Activated B cell treated with CpG ODN at 0.5 μM for 24 hours (primary cell): ENCODE measurements at regions of chr12 and their contacts with region 1.

Region 1: GRCh38 chr12:10331642-10332239 is 24.1 kb downstream of the KLRD1 start:
- DNase-seq: no peak
- ATAC-seq: peak; percentile 47
- H3K4me3 Mint-ChIP-seq: no peak overlapping the region
- H3K27ac Mint-ChIP-seq: no peak overlapping the region
- H3K4me1 Mint-ChIP-seq: no peaks in the 10 kb centered on the region
- H3K27me3 Mint-ChIP-seq: peaks cover 5% of the 10 kb centered on the region
- CTCF ChIP-seq: peak; percentile 24

Region 2: DNA sequence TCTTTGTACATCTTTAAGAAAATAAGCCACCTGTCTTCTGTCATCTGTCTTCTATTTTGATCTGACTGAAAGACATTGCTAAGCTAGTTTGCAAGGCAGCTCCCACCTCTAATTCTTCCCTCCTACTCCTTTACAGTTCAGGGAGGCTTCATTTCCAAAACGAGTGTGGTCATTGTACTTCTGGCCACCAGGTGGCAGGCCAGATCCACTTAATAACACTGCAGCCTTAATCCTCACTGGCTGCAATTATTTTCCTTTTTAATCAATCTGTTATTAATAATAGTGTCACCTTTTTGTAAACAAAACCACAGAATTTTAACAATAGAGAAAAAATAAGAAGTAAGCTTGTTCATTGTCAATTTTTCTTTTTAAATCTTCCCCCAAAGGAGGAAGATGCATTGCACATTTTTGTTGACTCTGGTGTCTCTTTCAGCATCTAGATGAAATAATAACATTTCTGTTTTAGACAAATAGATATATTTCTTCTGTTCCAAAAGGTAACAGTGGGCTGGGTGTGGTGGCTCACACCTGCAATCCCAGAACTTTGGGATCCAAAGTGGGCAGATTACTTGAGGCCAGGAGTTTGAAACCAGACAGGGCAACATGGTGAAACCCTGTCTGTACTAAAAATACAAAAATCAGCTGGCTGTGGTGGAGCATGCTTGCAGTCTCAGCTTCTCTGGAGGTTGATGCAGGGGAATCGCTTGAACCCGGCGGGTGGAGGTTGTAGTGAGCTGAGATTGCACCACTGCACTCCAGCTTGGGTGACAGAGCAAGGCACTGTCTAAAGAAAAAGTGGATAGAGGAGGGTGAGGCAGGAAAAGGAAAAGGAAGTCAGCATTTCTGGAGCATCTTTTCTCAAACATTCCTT is 95.7 kb before region 1 on chr12:
- CTCF ChIA-PET with region 1: interaction called, 3 read pairs
- POLR2A ChIA-PET with region 1: no interaction called
- intact Hi-C with region 1: loop called (anchors 1 kb)
- DNase-seq: no peak
- ATAC-seq: peak; percentile 58
- H3K4me3 Mint-ChIP-seq: no peak overlapping the region
- H3K27ac Mint-ChIP-seq: no peak overlapping the region
- H3K4me1 Mint-ChIP-seq: no peaks in the 10 kb centered on the region
- H3K27me3 Mint-ChIP-seq: peaks cover 2% of the 10 kb centered on the region
- CTCF ChIP-seq: peak; percentile 59

Region 3: DNA sequence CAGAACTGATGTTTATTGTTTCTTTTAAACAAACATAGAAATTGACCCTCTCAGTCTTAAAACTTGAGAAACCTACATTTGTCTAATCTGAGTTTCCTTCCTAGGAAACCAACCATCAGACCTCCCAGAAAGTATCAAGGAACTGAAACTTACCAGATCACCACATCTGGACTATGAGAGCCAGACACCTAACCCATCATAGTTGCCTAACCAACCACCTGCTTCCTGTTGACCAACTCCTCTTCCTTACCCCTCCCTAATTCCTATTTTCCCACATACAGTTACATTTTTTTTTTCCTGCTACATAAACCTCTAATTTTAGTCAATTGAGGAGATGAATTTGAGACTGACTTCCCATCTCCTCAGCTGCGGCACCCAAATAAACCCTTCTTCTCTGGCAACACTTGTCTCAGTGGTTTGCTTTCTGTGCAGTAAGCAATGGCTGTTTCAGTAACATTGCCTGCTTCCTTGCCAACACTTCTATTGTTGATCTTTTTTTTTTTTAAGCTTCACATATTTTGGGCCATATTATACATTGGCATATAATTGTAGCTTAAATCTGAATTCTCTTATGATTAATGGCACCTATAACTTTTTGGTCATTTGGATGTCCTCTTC is 10.3 kb after region 1 on chr12:
- CTCF ChIA-PET with region 1: no interaction called
- POLR2A ChIA-PET with region 1: no interaction called
- intact Hi-C with region 1: no loop called
- DNase-seq: no peak
- ATAC-seq: no peak
- H3K4me3 Mint-ChIP-seq: peak overlapping the region; percentile 41
- H3K27ac Mint-ChIP-seq: no peak overlapping the region
- H3K4me1 Mint-ChIP-seq: peaks cover 11% of the 10 kb centered on the region
- H3K27me3 Mint-ChIP-seq: no peaks in the 10 kb centered on the region
- CTCF ChIP-seq: no peak

Region 4: GRCh38 chr12:10409387-10409786 is 77.6 kb after region 1 on chr12 and contains the start of gene KLRC4:
- CTCF ChIA-PET with region 1: interaction called, 5 read pairs
- POLR2A ChIA-PET with region 1: no interaction called
- intact Hi-C with region 1: loop called (anchors 2 kb)
- DNase-seq: no peak
- ATAC-seq: no peak
- H3K4me3 Mint-ChIP-seq: no peak within 1 kb of the TSS
- H3K27ac Mint-ChIP-seq: no peak within 1 kb of the TSS
- H3K4me1 Mint-ChIP-seq: peaks cover 8% of the 10 kb centered on the region
- H3K27me3 Mint-ChIP-seq: peaks cover 3% of the 10 kb centered on the region
- CTCF ChIP-seq: no peak
- total RNA-seq, gene KLRC4: not detected in 2 replicates

Region 5: GRCh38 chr12:10501031-10501430 is 169.3 kb after region 1 on chr12:
- CTCF ChIA-PET with region 1: no interaction called
- POLR2A ChIA-PET with region 1: no interaction called
- intact Hi-C with region 1: loop called (anchors 5 kb)
- DNase-seq: no peak
- ATAC-seq: no peak
- H3K4me3 Mint-ChIP-seq: no peak overlapping the region
- H3K27ac Mint-ChIP-seq: no peak overlapping the region
- H3K4me1 Mint-ChIP-seq: no peaks in the 10 kb centered on the region
- H3K27me3 Mint-ChIP-seq: peaks cover 7% of the 10 kb centered on the region
- CTCF ChIP-seq: no peak

Region 6: GRCh38 chr12:10562306-10562933 is 230.7 kb after region 1 on chr12:
- CTCF ChIA-PET with region 1: interaction called, 37 read pairs
- POLR2A ChIA-PET with region 1: no interaction called
- intact Hi-C with region 1: loop called (anchors 1 kb)
- DNase-seq: no peak
- ATAC-seq: no peak
- H3K4me3 Mint-ChIP-seq: no peak overlapping the region
- H3K27ac Mint-ChIP-seq: no peak overlapping the region
- H3K4me1 Mint-ChIP-seq: no peaks in the 10 kb centered on the region
- H3K27me3 Mint-ChIP-seq: peaks cover 11% of the 10 kb centered on the region
- CTCF ChIP-seq: peak; percentile 87

Region 7: DNA sequence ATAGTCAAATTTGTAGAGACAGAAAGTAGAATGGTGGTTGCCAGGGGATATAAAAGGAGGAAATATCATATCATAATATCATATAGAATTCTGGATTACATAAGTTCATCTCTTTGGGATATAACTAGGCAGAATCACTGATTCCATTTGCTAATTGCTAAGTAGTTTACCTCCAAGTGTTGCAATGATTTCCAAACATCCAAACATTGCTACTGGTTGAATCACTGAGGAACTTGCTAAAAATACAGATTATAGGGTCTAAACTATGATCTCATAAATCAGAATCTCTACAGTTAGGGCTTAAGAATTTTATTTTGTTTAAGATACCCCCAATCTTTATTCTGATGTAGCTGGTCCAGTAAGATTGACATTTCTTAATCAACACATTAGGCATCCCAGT is 871.1 kb after region 1 on chr12:
- CTCF ChIA-PET with region 1: no interaction called
- POLR2A ChIA-PET with region 1: no interaction called
- intact Hi-C with region 1: loop called (anchors 2 kb)
- DNase-seq: no peak
- ATAC-seq: no peak
- H3K4me3 Mint-ChIP-seq: no peak overlapping the region
- H3K27ac Mint-ChIP-seq: no peak overlapping the region
- H3K4me1 Mint-ChIP-seq: no peaks in the 10 kb centered on the region
- H3K27me3 Mint-ChIP-seq: no peaks in the 10 kb centered on the region
- CTCF ChIP-seq: no peak